ENCODE measurements at regions of chr7 and their contacts with region 1.

Region 1: DNA sequence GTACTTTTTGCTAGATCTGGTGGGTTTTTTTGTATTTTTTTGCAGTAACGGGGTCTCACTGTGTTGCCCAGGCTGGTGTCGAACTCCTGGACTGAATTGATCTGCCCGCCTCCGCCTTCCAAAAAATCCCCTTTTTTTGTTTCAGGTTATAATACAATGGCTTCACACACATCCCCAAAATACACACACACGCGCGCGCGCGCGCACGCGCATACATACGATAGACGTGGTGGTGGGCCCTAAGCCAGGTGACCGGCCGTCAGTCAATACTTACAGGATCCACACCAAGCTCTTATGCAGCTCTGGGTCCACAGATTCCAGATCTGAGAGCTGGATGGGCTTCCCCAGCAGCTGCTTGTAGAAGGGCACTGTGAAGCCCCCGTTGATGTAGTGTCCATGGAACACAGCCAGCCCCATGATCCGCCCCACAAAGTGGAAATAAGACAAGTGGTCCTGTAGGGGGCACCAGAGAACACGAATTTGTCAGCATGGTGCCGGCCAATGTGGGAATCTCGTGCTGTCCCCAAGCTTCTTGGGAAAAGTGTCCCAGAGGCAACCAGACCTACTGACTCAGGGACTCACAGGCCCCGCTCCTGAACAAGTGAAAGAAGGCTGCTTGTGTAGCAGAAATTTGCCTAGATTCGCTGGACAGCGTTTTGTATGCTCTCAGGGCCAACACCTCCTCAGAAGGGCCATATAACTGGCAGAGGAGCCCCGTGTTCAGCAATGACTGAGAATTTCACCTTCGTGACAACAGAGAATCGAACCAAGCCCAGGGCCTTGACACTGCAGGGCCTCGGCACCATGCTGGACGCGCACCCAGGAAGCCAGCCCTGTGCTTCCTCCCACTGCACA is 103.6 kb downstream of the SMURF1 start:
- DNase-seq: peak; percentile 79
- ATAC-seq: peak; percentile 88
- H3K4me3 ChIP-seq: no peak overlapping the region
- H3K27ac ChIP-seq: no peak overlapping the region
- H3K4me1 ChIP-seq: peaks cover 26% of the 10 kb centered on the region
- H3K27me3 ChIP-seq: no peaks in the 10 kb centered on the region
- CTCF ChIP-seq: peak; percentile 92
- EP300 ChIP-seq: no peak
- POLR2A ChIP-seq: no peak
- RAD21 ChIP-seq: peak; percentile 91

Region 2: DNA sequence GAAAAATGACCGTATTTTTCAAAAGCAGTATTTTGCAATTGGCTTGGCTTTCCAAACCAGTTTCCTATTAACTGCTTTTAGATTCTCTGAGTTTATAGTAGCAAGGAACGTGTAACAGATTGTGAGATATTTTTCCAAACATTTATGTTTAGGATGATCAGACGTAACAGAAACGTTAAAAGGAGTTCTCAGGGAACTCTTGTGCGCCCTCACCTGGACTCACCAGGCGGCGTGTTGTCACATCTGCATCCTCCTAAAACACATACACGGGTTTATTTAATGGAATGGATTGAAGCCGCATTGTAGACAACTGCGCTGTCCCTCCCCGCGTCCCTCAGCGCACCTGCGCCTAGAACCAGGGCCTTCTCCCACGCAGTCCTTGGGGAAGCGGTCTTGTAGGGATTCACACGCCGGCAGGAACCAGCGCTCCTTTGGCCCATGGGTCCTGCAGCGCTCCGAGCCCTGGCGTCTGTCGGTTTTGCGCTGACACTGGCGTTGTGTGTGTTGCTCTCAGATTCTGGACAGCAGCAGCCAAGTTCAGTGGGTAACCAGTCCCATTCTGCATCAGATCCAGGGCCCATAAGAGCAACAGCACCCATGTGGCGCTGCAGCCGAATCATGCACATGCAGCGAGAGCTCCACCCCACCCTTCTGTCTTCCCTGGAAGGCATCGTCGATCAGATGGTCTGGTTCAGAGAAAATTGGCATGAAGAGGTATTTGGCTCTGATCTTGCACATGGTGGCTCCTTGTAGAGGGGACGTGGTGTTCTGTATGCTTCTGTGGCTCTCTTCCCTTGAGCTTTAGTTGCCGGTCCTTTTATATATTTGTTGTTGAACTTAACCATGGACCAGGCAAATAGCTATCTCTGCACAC is 47.1 kb before region 1 on chr7:
- CTCF ChIA-PET with region 1: no interaction called
- POLR2A ChIA-PET with region 1: no interaction called
- in situ Hi-C with region 1: no loop called
- intact Hi-C with region 1: no loop called
- DNase-seq: no peak
- ATAC-seq: no peak
- H3K4me3 ChIP-seq: no peak overlapping the region
- H3K27ac ChIP-seq: no peak overlapping the region
- H3K4me1 ChIP-seq: no peaks in the 10 kb centered on the region
- H3K27me3 ChIP-seq: no peaks in the 10 kb centered on the region
- CTCF ChIP-seq: no peak
- EP300 ChIP-seq: no peak
- POLR2A ChIP-seq: no peak
- RAD21 ChIP-seq: no peak

Region 3: DNA sequence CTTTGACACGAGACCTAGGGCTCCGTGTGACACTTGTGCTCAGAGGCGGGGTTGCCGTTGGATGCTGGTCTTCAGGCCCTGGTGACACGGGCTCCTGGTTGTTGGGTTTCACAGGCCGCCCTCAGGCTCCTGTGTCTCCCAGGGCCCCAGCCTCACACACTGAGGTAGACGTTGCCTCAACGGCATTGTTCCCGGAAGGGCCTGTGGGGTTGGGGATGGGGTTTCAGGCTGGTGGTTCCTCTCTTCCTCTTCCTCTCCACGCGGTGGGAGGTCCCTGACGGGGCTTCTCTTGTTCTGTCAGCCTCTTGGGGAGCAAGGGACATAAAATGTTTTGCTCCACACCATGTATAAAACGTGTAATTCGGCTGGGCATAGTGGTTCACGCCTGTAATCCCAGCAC is 36.9 kb before region 1 on chr7:
- CTCF ChIA-PET with region 1: no interaction called
- POLR2A ChIA-PET with region 1: no interaction called
- in situ Hi-C with region 1: no loop called
- intact Hi-C with region 1: no loop called
- DNase-seq: no peak
- ATAC-seq: no peak
- H3K4me3 ChIP-seq: no peak overlapping the region
- H3K27ac ChIP-seq: no peak overlapping the region
- H3K4me1 ChIP-seq: no peaks in the 10 kb centered on the region
- H3K27me3 ChIP-seq: no peaks in the 10 kb centered on the region
- CTCF ChIP-seq: no peak
- EP300 ChIP-seq: no peak
- POLR2A ChIP-seq: no peak
- RAD21 ChIP-seq: no peak

Region 4: GRCh38 chr7:99143853-99144672 is 103.7 kb after region 1 on chr7 and contains the start of gene SMURF1:
- CTCF ChIA-PET with region 1: no interaction called
- POLR2A ChIA-PET with region 1: no interaction called
- in situ Hi-C with region 1: loop called (anchors 5 kb)
- intact Hi-C with region 1: loop called (anchors 5 kb)
- DNase-seq: peak; percentile 23
- ATAC-seq: peak; percentile 55
- H3K4me3 ChIP-seq: peak within 1 kb of the TSS; percentile 74 to 97 (median 89)
- H3K27ac ChIP-seq: peak within 1 kb of the TSS; percentile 86
- H3K4me1 ChIP-seq: peaks cover 37% of the 10 kb centered on the region
- H3K27me3 ChIP-seq: no peaks in the 10 kb centered on the region; a peak in 1 of 5 replicates
- CTCF ChIP-seq: 0 out of 2 replicates have a peak, but pooled peaks have one; percentile 13
- EP300 ChIP-seq: no peak
- POLR2A ChIP-seq: peak; percentile 40 to 90
- RAD21 ChIP-seq: peak; percentile 32; the same call in 1 of the 2 replicates
- total RNA-seq, gene SMURF1: 11.1 and 12.0 TPM in 2 replicates

Region 5: DNA sequence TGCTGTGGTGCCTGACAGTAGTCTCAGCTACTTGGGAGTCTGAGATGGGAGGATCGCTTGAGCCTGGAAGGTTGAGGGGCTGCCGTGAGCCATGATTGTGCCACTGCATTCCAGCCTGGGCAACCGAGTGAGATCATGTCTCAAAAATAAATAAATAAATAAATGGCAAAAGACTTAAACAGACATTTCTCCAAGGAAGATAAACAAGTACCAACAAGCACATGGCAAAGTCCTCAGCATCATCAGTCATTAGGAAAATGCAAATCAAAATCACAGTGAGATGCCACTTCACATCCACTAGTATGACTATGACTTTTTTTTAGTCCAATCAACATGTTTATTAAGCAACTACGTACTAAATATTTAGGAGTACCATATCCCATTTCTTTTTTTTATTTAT is 188.9 kb after region 1 on chr7:
- CTCF ChIA-PET with region 1: no interaction called
- POLR2A ChIA-PET with region 1: no interaction called
- in situ Hi-C with region 1: loop called (anchors 5 kb)
- intact Hi-C with region 1: no loop called
- DNase-seq: no peak
- ATAC-seq: no peak
- H3K4me3 ChIP-seq: no peak overlapping the region
- H3K27ac ChIP-seq: no peak overlapping the region
- H3K4me1 ChIP-seq: peaks cover 32% of the 10 kb centered on the region
- H3K27me3 ChIP-seq: no peaks in the 10 kb centered on the region
- CTCF ChIP-seq: no peak
- EP300 ChIP-seq: no peak
- POLR2A ChIP-seq: no peak
- RAD21 ChIP-seq: no peak

Region 6: GRCh38 chr7:99267481-99267840 is 227.1 kb after region 1 on chr7:
- CTCF ChIA-PET with region 1: interaction called, 4 read pairs
- POLR2A ChIA-PET with region 1: interaction called, 3 read pairs
- in situ Hi-C with region 1: no loop called
- intact Hi-C with region 1: loop called (anchors 1 kb)
- DNase-seq: peak; percentile 85
- ATAC-seq: peak; percentile 97
- H3K4me3 ChIP-seq: peak overlapping the region in 1 of 3 experiments; percentile 19; a peak in 1 of 6 replicates
- H3K27ac ChIP-seq: no peak overlapping the region
- H3K4me1 ChIP-seq: peaks cover 30% of the 10 kb centered on the region
- H3K27me3 ChIP-seq: peaks cover 0 to 1% of the 10 kb centered on the region in 2 experiments; a peak in 1 of 5 replicates
- CTCF ChIP-seq: no peak
- EP300 ChIP-seq: peak in 1 of 2 experiments; percentile 16; a peak in 1 of 4 replicates
- POLR2A ChIP-seq: no peak
- RAD21 ChIP-seq: no peak

Region 7: DNA sequence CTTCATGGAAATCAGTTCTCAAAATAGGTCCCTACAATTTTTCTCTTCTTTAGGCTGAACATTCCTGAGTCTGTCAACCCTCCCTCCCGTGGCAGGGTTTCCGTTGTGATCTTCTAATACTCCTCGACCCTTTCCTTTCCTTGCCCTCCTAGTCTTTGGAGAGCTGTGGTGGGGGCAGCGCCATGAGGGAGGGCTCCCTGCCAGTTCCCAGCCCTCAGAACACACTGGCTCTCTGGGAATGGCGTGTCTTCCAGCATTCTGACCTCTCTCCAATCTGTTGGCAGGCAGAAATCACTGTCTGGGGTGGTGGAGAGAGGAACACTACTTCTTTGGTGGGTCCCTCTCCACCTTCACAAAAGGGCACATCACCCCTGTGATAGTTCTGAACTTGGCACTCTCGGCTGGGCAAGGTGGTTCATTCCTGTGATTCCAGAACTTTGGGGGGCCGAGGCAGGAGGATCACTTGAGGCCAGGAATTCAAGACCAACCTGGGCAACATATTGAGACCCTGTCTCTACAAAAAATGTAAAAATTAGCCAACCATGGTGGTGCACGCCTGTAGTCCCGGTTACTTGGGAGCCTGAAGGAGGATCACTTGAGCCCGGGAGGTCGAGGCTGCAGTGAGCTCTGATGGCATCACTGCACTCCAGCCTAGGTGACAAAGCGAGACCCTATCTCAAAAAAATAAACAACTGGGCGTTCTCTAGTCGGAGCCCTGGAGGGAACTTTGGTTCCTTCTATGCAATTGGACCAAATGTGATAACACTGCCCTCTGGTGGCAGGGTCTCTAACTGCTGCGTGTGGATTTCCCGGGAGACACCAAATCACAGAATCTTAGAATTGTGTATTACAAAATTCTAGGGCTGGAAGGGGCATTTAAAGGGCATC is 272.2 kb after region 1 on chr7:
- CTCF ChIA-PET with region 1: interaction called, 29 read pairs
- POLR2A ChIA-PET with region 1: no interaction called
- in situ Hi-C with region 1: loop called (anchors 5 kb)
- intact Hi-C with region 1: loop called (anchors 1 kb)
- DNase-seq: peak; percentile 68
- ATAC-seq: peak; percentile 84
- H3K4me3 ChIP-seq: no peak overlapping the region
- H3K27ac ChIP-seq: no peak overlapping the region
- H3K4me1 ChIP-seq: peaks cover 13% of the 10 kb centered on the region
- H3K27me3 ChIP-seq: no peaks in the 10 kb centered on the region
- CTCF ChIP-seq: peak; percentile 86
- EP300 ChIP-seq: no peak
- POLR2A ChIP-seq: no peak
- RAD21 ChIP-seq: peak; percentile 82

Measured in HepG2 (cell line).